Aorta (tissue), 5 donors: ENCODE measurements at regions of chr10 and their contacts with region 1.

Region 1: GRCh38 chr10:90288391-90288933 is 569.4 kb downstream of the HTR7 start:
- DNase-seq: no peak
- ATAC-seq: peak; percentile 50
- H3K4me3 ChIP-seq: no peak overlapping the region
- H3K27ac ChIP-seq: peak overlapping the region in 1 of 2 donors; percentile 67
- H3K4me1 ChIP-seq: peaks cover 0 to 3% of the 10 kb centered on the region in 2 donors
- H3K27me3 ChIP-seq: no peaks in the 10 kb centered on the region

Region 2: GRCh38 chr10:90592638-90593302 is 304.3 kb after region 1 on chr10:
- intact Hi-C with region 1: loop called in 1 of 2 experiments (anchors 10 kb)
- DNase-seq: peak; percentile 77 to 85
- ATAC-seq: peak; percentile 70
- H3K4me3 ChIP-seq: no peak overlapping the region
- H3K27ac ChIP-seq: no peak overlapping the region
- H3K4me1 ChIP-seq: no peaks in the 10 kb centered on the region
- H3K27me3 ChIP-seq: no peaks in the 10 kb centered on the region

Region 3: GRCh38 chr10:90787393-90788198 is 499.1 kb after region 1 on chr10:
- intact Hi-C with region 1: loop called in 1 of 2 experiments (anchors 10 kb)
- DNase-seq: no peak
- ATAC-seq: no peak
- H3K4me3 ChIP-seq: no peak overlapping the region
- H3K27ac ChIP-seq: no peak overlapping the region
- H3K4me1 ChIP-seq: no peaks in the 10 kb centered on the region
- H3K27me3 ChIP-seq: no peaks in the 10 kb centered on the region

Region 4: GRCh38 chr10:90862908-90863514 is 574.5 kb after region 1 on chr10:
- intact Hi-C with region 1: loop called in 1 of 2 experiments (anchors 10 kb)
- DNase-seq: no peak
- ATAC-seq: no peak
- H3K4me3 ChIP-seq: no peak overlapping the region
- H3K27ac ChIP-seq: no peak overlapping the region
- H3K4me1 ChIP-seq: no peaks in the 10 kb centered on the region
- H3K27me3 ChIP-seq: no peaks in the 10 kb centered on the region